Activated CD8-positive, alpha-beta T cell treated with anti-CD3 and anti-CD28 coated beads for 36 hours (primary cell): ENCODE measurements at regions of chr15 and their contacts with region 1.

Region 1: GRCh38 chr15:64809649-64810496 is 15.6 kb downstream of the PIF1 start:
- DNase-seq: peak; percentile 84
- ATAC-seq: peak; percentile 80
- H3K4me3 Mint-ChIP-seq: no peak overlapping the region
- H3K27ac Mint-ChIP-seq: no peak overlapping the region
- H3K4me1 Mint-ChIP-seq: no peaks in the 10 kb centered on the region
- H3K27me3 Mint-ChIP-seq: no peaks in the 10 kb centered on the region
- CTCF ChIP-seq: peak; percentile 98

Region 2: DNA sequence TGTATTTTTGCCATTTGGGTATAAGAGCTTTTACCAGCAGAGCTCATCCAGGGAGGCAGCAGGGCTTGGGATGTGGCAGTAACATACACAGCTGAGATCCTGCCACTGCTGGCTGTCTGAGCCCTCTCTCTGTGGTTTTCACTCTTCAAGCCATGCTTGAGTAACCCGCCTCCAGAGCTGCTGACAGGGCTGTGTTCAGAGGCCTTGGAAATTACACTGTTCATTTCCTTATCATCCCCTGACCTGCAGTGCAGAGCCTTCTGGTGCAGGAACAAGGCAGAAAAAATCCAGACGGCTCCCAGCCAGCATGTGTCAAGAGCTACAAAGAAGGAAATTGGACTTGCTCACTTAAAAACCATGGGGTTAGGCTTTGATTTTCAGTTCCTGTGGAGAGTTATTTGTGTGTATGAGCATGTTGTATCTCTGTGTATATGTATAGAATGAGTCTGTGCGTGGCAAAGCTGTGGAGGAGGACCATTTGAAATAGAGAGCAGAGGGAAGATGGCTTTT is 302.5 kb before region 1 on chr15:
- CTCF ChIA-PET with region 1: no interaction called
- POLR2A ChIA-PET with region 1: no interaction called
- intact Hi-C with region 1: no loop called
- DNase-seq: peak; percentile 64
- ATAC-seq: peak; percentile 85
- H3K4me3 Mint-ChIP-seq: no peak overlapping the region
- H3K27ac Mint-ChIP-seq: peak overlapping the region; percentile 40
- H3K4me1 Mint-ChIP-seq: peaks cover 71% of the 10 kb centered on the region
- H3K27me3 Mint-ChIP-seq: no peaks in the 10 kb centered on the region
- CTCF ChIP-seq: no peak

Region 3: DNA sequence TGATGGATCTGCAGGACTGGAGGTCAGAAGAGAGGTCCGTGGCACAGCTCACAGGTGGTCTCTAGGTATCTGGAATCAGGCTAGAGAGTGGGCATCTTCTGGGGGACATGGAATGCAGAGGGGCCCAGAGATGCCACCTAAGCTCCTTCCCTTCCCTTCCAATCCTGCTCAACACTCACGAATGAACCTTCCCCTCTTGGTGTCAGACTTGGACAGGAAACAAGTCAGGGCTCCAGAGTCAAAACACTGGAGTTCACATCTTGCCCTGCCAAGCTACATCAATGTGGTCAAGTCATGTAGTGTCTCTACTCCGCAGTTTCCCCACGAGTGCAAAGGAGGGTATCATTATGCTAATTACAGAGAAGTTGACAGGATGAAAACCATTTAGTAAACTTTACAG is 18.5 kb before region 1 on chr15:
- CTCF ChIA-PET with region 1: interaction called, 12 read pairs
- POLR2A ChIA-PET with region 1: no interaction called
- intact Hi-C with region 1: no loop called
- DNase-seq: no peak
- ATAC-seq: no peak
- H3K4me3 Mint-ChIP-seq: no peak overlapping the region
- H3K27ac Mint-ChIP-seq: no peak overlapping the region
- H3K4me1 Mint-ChIP-seq: no peaks in the 10 kb centered on the region
- H3K27me3 Mint-ChIP-seq: no peaks in the 10 kb centered on the region
- CTCF ChIP-seq: no peak

Region 4: DNA sequence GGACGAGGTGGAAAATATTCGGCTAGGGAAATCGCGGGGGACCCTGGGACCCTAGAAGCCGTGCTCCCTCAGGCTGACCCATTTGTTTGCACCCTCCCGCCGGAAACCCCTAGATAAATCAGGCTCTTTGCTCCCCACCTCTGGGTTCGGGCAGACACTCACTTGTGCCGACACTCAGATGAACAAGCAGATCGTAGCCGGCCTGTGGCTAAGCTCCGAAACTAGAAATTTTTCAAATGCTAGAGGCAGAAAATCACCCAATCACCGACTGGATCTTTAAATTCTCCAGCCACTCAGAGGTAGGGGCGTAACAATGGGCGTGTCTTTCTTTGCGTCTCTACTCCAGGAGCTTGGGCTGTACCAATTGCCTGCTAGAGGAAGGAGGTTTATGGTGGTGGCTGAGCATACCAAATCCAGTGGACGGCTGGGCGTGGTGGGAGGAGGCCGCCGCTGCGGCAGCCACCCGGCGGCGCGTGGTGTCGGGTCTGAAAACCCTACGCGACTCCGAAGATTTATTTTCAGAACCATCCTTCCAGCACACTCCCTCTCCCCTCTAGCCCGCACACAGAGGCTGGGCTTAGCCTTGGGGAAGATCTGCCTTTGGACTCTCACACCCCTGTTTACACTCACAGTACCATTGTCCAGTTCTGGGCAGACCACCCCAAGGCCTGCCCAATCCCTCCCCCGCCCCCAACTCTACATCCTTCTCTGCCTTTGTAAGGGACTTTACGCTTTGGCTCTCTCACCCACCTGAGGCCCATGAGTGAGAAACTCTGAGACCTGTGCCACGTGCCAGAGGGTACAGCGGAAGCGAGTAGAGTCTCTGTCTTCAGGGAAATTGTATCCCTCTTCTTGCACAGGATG is 15.8 kb after region 1 on chr15 and contains the start of gene PIF1:
- CTCF ChIA-PET with region 1: interaction called, 26 read pairs
- POLR2A ChIA-PET with region 1: no interaction called
- intact Hi-C with region 1: no loop called
- DNase-seq: peak; percentile 97
- ATAC-seq: peak; percentile 94
- H3K4me3 Mint-ChIP-seq: peak within 1 kb of the TSS; percentile 93
- H3K27ac Mint-ChIP-seq: peak within 1 kb of the TSS; percentile 87
- H3K4me1 Mint-ChIP-seq: peaks cover 17% of the 10 kb centered on the region
- H3K27me3 Mint-ChIP-seq: peaks cover 5% of the 10 kb centered on the region
- CTCF ChIP-seq: no peak
- total RNA-seq, gene PIF1: 50.0 TPM

Region 5: GRCh38 chr15:64865126-64865997 is 55.5 kb after region 1 on chr15:
- CTCF ChIA-PET with region 1: interaction called, 10 read pairs
- POLR2A ChIA-PET with region 1: no interaction called
- intact Hi-C with region 1: no loop called
- DNase-seq: no peak
- ATAC-seq: peak; percentile 37
- H3K4me3 Mint-ChIP-seq: no peak overlapping the region
- H3K27ac Mint-ChIP-seq: no peak overlapping the region
- H3K4me1 Mint-ChIP-seq: peaks cover 3% of the 10 kb centered on the region
- H3K27me3 Mint-ChIP-seq: no peaks in the 10 kb centered on the region
- CTCF ChIP-seq: no peak

Region 6: DNA sequence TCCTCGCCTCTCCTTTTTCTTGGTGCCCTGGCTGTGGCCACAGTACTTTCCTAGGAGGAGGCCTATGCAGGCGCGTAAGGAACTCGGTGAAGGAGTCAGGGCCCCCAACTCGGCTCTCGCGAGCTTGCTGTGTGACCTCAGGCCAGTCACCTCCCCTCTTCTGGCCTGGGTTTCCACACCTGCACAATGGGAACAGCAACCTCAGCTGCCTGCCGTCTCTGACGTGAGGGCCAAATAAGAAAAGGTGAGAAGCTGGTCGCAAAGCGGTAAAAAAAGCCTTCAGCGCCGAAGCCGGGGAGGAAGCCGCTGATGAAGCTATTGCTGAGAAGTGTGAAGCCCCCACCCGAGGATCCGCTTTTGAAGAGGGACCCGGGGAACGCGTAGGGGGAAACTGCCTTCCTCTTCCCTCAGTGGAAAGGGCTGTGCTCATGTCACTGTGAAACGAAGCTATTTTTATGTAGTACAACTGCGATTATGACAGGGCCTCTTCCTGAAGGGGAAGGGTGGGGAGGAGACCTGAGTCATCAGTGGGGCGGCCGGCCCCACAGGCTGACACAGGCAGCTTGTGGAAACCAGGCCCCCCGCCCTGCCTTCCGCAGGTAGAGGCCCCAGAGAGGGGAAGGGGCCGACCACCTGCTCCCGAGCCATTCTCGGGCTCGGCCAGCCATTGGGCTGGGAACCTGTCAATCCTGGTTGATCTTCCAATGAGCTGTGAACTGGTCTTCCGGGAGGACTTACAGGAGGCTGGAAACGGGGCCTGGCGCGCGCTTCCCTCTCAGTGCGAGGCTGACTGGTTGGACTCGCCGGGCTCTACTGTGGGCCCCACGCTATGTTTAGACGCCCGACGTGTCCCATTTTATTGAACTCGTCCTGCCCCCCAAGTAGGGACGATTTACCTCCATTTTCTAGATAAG is 83.9 kb after region 1 on chr15:
- CTCF ChIA-PET with region 1: interaction called, 12 read pairs
- POLR2A ChIA-PET with region 1: no interaction called
- intact Hi-C with region 1: no loop called
- DNase-seq: peak; percentile 99
- ATAC-seq: peak; percentile 82
- H3K4me3 Mint-ChIP-seq: peak overlapping the region; percentile 91
- H3K27ac Mint-ChIP-seq: peak overlapping the region; percentile 99
- H3K4me1 Mint-ChIP-seq: peaks cover 54% of the 10 kb centered on the region
- H3K27me3 Mint-ChIP-seq: no peaks in the 10 kb centered on the region
- CTCF ChIP-seq: no peak

Region 7: GRCh38 chr15:64905119-64905831 is 95.4 kb after region 1 on chr15:
- CTCF ChIA-PET with region 1: interaction called, 35 read pairs
- POLR2A ChIA-PET with region 1: no interaction called
- intact Hi-C with region 1: no loop called
- DNase-seq: peak; percentile 88
- ATAC-seq: peak; percentile 95
- H3K4me3 Mint-ChIP-seq: peak overlapping the region; percentile 69
- H3K27ac Mint-ChIP-seq: peak overlapping the region; percentile 49
- H3K4me1 Mint-ChIP-seq: peaks cover 27% of the 10 kb centered on the region
- H3K27me3 Mint-ChIP-seq: no peaks in the 10 kb centered on the region
- CTCF ChIP-seq: peak; percentile 89